GM10248 (cell line): ENCODE measurements at regions of chr16 and their contacts with region 1.

Region 1: GRCh38 chr16:27179500-27180072 is 23.7 kb upstream of the KDM8 start:
- DNase-seq: peak; percentile 88
- CTCF ChIP-seq: peak; percentile 95

Region 2: GRCh38 chr16:27154705-27155521 is 24.7 kb before region 1 on chr16:
- CTCF ChIA-PET with region 1: interaction called, 16 read pairs
- POLR2A ChIA-PET with region 1: no interaction called
- DNase-seq: peak; percentile 78
- CTCF ChIP-seq: peak; percentile 95

Region 3: GRCh38 chr16:27203429-27204231 is 24.0 kb after region 1 on chr16 and contains the start of gene KDM8:
- CTCF ChIA-PET with region 1: interaction called, 57 read pairs
- POLR2A ChIA-PET with region 1: no interaction called
- DNase-seq: peak; percentile 99
- CTCF ChIP-seq: no peak

Region 4: DNA sequence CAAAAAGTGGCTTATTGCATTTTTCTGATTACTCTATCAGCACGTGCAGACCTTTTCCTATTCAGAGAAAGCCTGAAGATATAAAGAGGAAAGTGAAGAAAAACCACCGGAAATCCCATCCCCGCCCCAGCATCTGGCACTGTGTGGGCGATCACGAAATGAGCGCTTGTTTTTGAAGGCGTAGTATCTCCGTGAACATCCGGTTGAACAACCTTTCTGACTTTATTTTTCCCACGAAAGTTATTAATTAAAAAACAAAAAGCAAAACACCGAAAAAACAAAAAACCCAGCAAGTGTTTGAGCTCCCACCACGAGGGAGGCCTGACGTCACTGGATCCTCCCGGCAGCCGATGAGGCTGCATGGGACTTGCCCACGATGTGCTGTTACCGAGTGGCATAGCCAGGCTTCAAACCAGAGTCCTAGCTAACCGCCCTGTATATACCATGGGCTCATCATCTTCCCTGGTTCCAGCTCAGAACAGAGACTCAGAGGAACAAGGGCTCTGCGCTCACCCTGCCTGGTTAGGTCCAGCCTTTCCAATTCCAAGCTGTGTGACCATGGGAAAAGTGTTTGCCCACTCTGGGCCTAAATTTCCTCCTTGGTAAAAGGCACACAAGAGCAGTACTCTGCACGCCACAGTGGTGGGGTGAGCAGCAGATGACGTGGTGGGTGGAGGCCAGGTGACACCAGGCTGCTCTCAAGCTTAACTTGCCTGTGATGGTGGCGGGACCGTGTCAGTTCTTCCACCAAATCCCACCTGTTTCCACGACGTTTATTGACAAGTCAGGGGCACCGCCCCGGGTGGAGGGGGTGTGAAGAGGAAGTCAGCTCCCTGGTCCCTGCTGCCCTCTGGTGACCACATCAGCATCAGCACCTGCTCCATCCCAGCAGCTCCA is 188.1 kb after region 1 on chr16:
- CTCF ChIA-PET with region 1: interaction called, 56 read pairs
- POLR2A ChIA-PET with region 1: no interaction called
- DNase-seq: peak; percentile 86
- CTCF ChIP-seq: peak; percentile 69

Region 5: DNA sequence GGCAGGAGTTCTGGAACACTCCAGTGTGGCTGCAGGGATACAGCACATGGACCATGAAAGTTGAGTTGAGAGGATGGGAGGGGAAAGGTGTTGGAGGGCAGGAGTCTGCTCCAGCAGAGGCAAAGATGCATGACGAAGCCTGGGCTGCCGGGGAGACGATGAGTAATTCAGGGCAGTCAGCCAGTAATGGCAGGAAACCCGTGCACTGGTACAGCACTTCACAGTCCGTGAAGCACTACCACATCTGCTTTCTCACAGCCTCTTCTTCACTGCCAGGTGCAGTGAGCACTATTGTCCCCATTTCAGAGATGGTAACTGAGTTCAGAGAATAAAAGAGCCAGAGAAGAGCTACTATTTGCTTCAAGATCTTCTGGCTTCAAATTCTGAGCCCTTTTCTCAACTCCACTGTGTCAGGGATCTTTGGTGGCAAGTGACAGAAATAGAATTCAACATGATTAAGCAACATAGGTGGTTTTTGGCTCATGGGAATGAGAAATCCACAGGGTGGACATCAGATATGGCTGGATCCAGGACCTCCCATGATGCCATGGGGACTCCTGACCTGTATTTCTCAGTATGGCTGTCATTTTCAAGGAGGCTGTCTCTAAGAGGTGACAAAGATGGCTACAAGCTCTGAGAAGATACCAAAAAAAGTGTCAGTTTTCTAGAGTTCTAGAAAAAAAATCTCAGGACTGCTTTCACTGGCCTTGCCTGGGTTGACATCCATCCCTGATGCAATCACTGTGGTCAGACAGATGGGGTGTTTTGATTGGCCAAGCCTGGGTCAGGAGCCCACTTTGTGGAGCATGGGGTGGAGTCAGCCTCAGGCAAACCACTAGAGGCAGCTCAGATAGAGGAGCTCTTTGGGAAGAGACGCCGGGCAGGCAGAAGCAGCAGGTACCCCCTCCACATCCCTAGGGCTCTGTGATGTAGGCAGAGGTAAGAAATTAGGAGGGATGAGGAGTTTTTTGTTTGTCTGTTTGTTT is 247.1 kb after region 1 on chr16:
- CTCF ChIA-PET with region 1: interaction called, 10 read pairs
- POLR2A ChIA-PET with region 1: no interaction called
- DNase-seq: peak; percentile 81
- CTCF ChIP-seq: no peak

Region 6: GRCh38 chr16:27458258-27458657 is 278.7 kb after region 1 on chr16:
- CTCF ChIA-PET with region 1: interaction called, 28 read pairs
- POLR2A ChIA-PET with region 1: no interaction called
- DNase-seq: no peak
- CTCF ChIP-seq: no peak